ENCODE measurements at regions of chr9 and their contacts with region 1.

Region 1: GRCh38 chr9:91207729-91208418 is 153.8 kb downstream of the AUH start:
- DNase-seq: peak; percentile 61
- H3K4me3 Mint-ChIP-seq: peak overlapping the region; percentile 7
- H3K27ac Mint-ChIP-seq: peak overlapping the region; percentile 98
- H3K4me1 Mint-ChIP-seq: peaks cover 68% of the 10 kb centered on the region
- H3K27me3 Mint-ChIP-seq: no peaks in the 10 kb centered on the region

Region 2: GRCh38 chr9:90851444-90851843 is 356.4 kb before region 1 on chr9:
- CTCF ChIA-PET with region 1: no interaction called
- intact Hi-C with region 1: no loop called
- DNase-seq: no peak
- H3K4me3 Mint-ChIP-seq: no peak overlapping the region
- H3K27ac Mint-ChIP-seq: no peak overlapping the region
- H3K4me1 Mint-ChIP-seq: no peaks in the 10 kb centered on the region
- H3K27me3 Mint-ChIP-seq: no peaks in the 10 kb centered on the region

Region 3: GRCh38 chr9:91047993-91048607 is 159.8 kb before region 1 on chr9:
- CTCF ChIA-PET with region 1: no interaction called
- intact Hi-C with region 1: loop called (anchors 1 kb)
- DNase-seq: peak; percentile 75
- H3K4me3 Mint-ChIP-seq: peak overlapping the region; percentile 20
- H3K27ac Mint-ChIP-seq: peak overlapping the region; percentile 89
- H3K4me1 Mint-ChIP-seq: peaks cover 44% of the 10 kb centered on the region
- H3K27me3 Mint-ChIP-seq: peaks cover 36% of the 10 kb centered on the region

Region 4: GRCh38 chr9:91150998-91151717 is 56.7 kb before region 1 on chr9:
- CTCF ChIA-PET with region 1: interaction called, 12 read pairs
- intact Hi-C with region 1: loop called (anchors 1 kb)
- DNase-seq: peak; percentile 66
- H3K4me3 Mint-ChIP-seq: peak overlapping the region; percentile 15
- H3K27ac Mint-ChIP-seq: peak overlapping the region; percentile 89
- H3K4me1 Mint-ChIP-seq: peaks cover 62% of the 10 kb centered on the region
- H3K27me3 Mint-ChIP-seq: peaks cover 2% of the 10 kb centered on the region

Region 5: DNA sequence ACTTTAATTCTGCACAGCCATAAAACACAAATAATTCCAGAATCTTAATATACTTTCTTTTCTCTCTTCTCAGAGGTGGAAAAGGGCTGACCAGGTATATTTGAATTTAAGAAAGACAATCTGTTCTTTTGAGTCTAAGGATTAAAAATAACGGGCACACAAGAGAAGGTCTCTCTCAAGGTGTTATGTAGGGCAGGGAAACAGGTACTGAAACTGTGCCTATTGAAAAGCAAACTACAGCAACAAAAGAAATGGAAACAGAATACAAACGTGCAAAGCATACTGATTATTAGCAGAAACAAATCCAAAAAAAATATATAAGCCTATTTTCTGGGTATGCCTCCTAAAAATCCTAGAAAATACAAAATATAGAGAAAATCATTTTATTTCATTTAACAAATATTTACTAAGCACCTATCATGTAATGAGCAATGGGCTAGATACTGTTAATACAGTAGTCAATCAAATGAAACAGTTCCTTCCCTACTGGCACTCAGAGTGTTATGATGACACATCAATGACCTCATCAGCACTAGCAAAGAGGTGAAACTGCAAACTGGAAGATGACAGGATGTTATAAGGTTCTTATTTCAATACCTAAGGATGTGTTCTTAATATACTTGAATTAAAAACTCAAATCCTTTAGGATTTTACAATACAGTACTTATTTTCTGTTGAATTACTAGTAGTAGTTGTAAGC is 66.1 kb after region 1 on chr9:
- CTCF ChIA-PET with region 1: interaction called, 3 read pairs
- intact Hi-C with region 1: loop called (anchors 2 kb)
- DNase-seq: peak; percentile 25
- H3K4me3 Mint-ChIP-seq: no peak overlapping the region
- H3K27ac Mint-ChIP-seq: no peak overlapping the region
- H3K4me1 Mint-ChIP-seq: peaks cover 8% of the 10 kb centered on the region
- H3K27me3 Mint-ChIP-seq: no peaks in the 10 kb centered on the region

Region 6: GRCh38 chr9:91395553-91396471 is 187.9 kb after region 1 on chr9:
- CTCF ChIA-PET with region 1: no interaction called
- intact Hi-C with region 1: loop called (anchors 1 kb)
- DNase-seq: peak; percentile 41
- H3K4me3 Mint-ChIP-seq: no peak overlapping the region
- H3K27ac Mint-ChIP-seq: peak overlapping the region; percentile 74
- H3K4me1 Mint-ChIP-seq: peaks cover 11% of the 10 kb centered on the region
- H3K27me3 Mint-ChIP-seq: peaks cover 12% of the 10 kb centered on the region

Region 7: GRCh38 chr9:91711755-91712601 is 504.1 kb after region 1 on chr9:
- CTCF ChIA-PET with region 1: no interaction called
- intact Hi-C with region 1: loop called (anchors 5 kb)
- DNase-seq: peak; percentile 92
- H3K4me3 Mint-ChIP-seq: no peak overlapping the region
- H3K27ac Mint-ChIP-seq: no peak overlapping the region
- H3K4me1 Mint-ChIP-seq: no peaks in the 10 kb centered on the region
- H3K27me3 Mint-ChIP-seq: peaks cover 28% of the 10 kb centered on the region

Measured in activated naive CD4-positive, alpha-beta T cell treated with anti-CD3 and anti-CD28 coated beads for 36 hours (primary cell).